Right cardiac atrium (tissue), 5 donors: ENCODE measurements at regions of chr1 and their contacts with region 1.

Region 1: DNA sequence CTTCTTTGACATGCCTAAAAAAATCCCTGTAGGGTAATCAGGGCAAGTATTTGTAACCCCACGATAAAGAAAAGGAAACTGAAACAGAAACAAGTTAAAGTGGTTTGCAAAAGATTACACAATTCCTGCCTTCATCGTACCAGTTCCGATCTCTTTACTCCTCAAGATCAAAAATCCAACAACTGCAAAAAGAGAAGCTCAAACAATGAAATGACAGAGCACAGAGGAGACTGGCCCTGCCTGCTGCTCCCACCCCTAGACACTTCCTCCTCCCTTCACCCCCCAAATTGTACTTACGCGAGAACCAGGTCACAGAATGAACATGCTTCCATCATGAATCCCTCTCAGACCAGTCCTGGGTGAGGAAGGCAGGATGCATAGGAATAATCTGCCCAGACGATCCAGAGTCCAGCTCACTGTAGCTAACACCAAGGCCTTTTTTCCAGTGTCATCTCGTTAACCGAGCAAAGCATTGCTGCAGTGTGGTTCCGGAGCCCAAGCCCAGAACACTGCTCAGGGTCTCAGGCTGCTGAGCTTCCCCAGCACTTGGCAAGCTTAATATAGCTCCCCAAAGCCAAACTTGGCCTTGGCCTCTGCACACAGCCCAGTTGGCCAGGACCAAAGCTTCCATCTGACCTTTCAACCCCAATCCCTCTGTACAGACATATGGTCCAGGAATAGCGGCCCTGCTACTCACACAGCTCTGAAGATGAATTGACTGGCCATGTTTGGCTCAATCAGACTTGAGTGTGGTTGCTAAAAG is 20.3 kb downstream of the RXRG start:
- DNase-seq: peak in 2 of 3 donors; percentile 72 to 76
- ATAC-seq: peak; percentile 72 to 85
- H3K4me3 ChIP-seq: peak overlapping the region; percentile 21
- H3K27ac ChIP-seq: peak overlapping the region; percentile 13
- H3K4me1 ChIP-seq: peaks cover 3% of the 10 kb centered on the region
- H3K27me3 ChIP-seq: no peaks in the 10 kb centered on the region

Region 2: GRCh38 chr1:165481820-165482532 is 57.3 kb after region 1 on chr1:
- intact Hi-C with region 1: loop called in 1 of 4 experiments (anchors 10 kb)
- DNase-seq: peak in 2 of 3 donors; percentile 28 to 49
- ATAC-seq: peak; percentile 90
- H3K4me3 ChIP-seq: no peak overlapping the region
- H3K27ac ChIP-seq: no peak overlapping the region
- H3K4me1 ChIP-seq: no peaks in the 10 kb centered on the region
- H3K27me3 ChIP-seq: no peaks in the 10 kb centered on the region